ENCODE measurements at regions of chr2 and their contacts with region 1.

Region 1: DNA sequence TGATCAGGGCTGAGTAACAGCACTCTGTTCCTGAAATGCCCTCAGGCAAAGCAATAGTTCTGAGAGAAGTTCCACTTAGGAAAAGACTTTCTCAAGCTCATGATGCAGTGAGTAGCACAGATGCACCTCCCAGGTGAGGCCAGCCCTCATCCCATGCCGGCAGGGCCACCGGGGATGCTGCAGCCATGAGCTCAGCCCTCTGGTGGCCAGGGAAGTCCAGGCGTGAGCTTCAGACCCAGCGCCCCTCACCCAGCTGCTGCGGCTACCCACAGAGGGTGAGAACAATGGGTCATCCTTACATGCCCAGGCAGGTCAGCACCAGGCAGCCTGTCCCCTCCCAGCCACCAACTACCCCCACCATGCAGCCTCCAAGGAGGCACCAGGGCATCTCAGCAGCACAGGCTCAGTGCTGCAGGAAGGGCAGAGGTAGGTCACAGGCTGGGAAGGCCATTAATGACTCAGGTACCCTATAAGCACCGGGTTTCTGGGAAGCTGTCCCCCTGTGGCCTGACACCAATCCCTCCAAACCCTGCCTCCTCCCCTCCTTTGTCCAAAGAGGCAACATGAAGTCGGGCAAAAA is 50.6 kb downstream of the TTC32 start:
- DNase-seq: no peak
- H3K4me3 ChIP-seq: no peak overlapping the region
- H3K27ac ChIP-seq: no peak overlapping the region
- H3K4me1 ChIP-seq: peaks cover 0 to 16% (median 8%) of the 10 kb centered on the region in 4 donors
- H3K27me3 ChIP-seq: no peaks in the 10 kb centered on the region
- CTCF ChIP-seq: no peak

Region 2: GRCh38 chr2:19807866-19808265 is 43.3 kb before region 1 on chr2:
- intact Hi-C with region 1: loop called (anchors 5 kb)
- DNase-seq: no peak
- H3K4me3 ChIP-seq: no peak overlapping the region
- H3K27ac ChIP-seq: peak overlapping the region; percentile 69 to 77
- H3K4me1 ChIP-seq: peaks cover 0 to 63% (median 45%) of the 10 kb centered on the region in 4 donors
- H3K27me3 ChIP-seq: no peaks in the 10 kb centered on the region
- CTCF ChIP-seq: no peak